MCF 10A (cell line): ENCODE measurements at regions of chr3 and their contacts with region 1.

Region 1: GRCh38 chr3:183252973-183253901 is at the start of gene B3GNT5:
- DNase-seq: peak; percentile 85
- H3K4me3 Mint-ChIP-seq: peak within 1 kb of the TSS; percentile 93
- H3K27ac Mint-ChIP-seq: no peak within 1 kb of the TSS
- H3K4me1 Mint-ChIP-seq: peaks cover 38% of the 10 kb centered on the region
- H3K27me3 Mint-ChIP-seq: no peaks in the 10 kb centered on the region
- CTCF ChIP-seq: no peak
- total RNA-seq, gene B3GNT5: 80.1 and 104 TPM in 2 replicates

Region 2: DNA sequence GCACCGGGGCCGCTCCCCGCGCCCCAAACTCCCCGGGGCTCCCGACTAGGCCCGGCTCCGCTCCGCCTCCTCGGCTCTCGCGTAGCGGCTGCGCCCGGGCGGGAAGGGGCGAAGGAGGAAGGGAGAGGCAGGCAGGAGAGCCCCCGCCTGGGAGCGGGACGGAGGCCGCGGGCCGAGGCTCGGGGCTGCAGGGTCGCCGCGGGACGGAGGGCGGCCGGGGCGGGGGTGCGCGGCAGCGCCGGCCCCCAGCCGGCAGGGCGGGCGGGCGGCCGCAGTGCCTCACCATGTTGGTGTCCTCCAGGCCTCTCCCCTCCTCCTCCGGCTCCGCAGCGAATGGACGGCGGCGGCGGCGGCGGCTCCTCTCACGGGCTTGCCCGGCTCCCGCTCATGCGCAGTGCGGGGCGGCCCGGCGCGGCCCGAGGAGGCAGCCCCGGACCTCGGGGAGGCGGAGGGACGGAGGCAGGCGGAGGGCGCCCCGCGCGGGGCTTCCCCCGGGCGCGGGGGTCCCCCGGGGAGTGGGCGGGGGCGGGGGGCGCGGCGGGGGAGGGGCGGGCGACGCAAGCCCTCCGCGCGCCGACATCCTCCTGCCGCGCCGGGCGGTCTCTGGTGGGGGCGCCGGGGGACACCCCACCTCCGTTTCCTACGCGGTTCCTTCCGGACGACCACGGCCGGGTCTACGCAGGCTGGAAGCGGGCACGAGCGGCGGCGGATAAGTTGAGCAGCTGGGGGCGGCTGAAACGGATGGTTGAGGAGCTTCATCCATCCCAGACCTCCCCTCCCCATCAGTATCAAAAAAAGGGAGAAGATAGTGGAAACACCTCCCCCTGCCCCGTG is 272.8 kb before region 1 on chr3 and contains the start of gene DCUN1D1:
- CTCF ChIA-PET with region 1: no interaction called
- POLR2A ChIA-PET with region 1: no interaction called
- intact Hi-C with region 1: no loop called
- DNase-seq: peak; percentile 86
- H3K4me3 Mint-ChIP-seq: peak within 1 kb of the TSS; percentile 81
- H3K27ac Mint-ChIP-seq: peak within 1 kb of the TSS; percentile 84
- H3K4me1 Mint-ChIP-seq: no peaks in the 10 kb centered on the region
- H3K27me3 Mint-ChIP-seq: no peaks in the 10 kb centered on the region
- CTCF ChIP-seq: no peak
- total RNA-seq, gene DCUN1D1: 39.1 and 50.1 TPM in 2 replicates

Region 3: DNA sequence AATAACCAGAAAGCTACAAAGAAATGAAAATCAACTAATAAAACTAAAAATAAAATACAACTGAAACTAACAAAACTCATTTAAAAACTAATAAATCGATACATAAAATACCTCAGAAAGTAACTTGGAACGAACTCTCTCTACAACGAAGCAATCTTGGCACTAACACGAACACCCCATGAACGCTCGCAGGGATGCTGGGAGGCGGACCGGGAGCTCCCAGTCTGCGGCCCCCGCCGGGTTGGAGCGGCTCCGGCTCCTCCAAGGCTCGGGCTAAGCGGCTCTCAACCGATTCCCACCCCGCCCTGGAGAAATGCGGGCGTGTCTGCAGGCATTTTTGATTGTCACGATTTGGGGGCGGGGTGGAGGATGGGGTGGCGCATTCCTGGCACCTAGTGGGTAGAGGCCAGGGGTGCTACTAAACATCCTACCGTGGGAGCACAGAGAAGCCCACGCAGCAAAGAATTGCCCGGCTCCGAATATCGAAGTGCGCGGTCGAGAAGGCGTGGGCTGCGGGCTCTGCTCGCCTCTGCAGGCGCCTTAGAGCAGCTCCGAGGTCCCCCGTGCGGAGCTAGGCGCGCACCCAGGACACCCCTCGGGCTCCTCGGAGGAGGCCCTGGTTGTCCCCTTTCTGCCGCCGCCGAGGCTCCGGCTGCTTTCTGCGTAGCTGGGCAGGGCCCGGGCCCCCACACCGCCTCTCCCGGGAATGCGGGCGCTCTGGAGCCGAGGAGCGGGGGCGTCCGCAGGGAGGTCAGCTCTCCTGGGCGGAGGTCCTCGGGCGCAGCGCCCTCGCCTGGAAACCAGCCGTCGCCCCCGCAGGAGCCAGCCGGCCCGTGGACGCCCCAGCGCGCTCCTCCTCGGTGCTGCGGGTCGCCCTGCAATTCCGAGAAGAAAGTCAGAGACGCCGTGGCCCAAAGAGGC is 74.3 kb before region 1 on chr3:
- CTCF ChIA-PET with region 1: interaction called, 36 read pairs
- POLR2A ChIA-PET with region 1: interaction called, 31 read pairs
- intact Hi-C with region 1: loop called (anchors 1 kb)
- DNase-seq: peak; percentile 61
- H3K4me3 Mint-ChIP-seq: peak overlapping the region; percentile 71
- H3K27ac Mint-ChIP-seq: no peak overlapping the region
- H3K4me1 Mint-ChIP-seq: peaks cover 5% of the 10 kb centered on the region
- H3K27me3 Mint-ChIP-seq: peaks cover 43% of the 10 kb centered on the region
- CTCF ChIP-seq: no peak

Region 4: GRCh38 chr3:183275418-183275817 is 22.2 kb after region 1 on chr3:
- CTCF ChIA-PET with region 1: interaction called, 3 read pairs
- POLR2A ChIA-PET with region 1: interaction called, 140 read pairs
- intact Hi-C with region 1: no loop called
- DNase-seq: peak; percentile 77
- H3K4me3 Mint-ChIP-seq: peak overlapping the region; percentile 19
- H3K27ac Mint-ChIP-seq: peak overlapping the region; percentile 17
- H3K4me1 Mint-ChIP-seq: peaks cover 41% of the 10 kb centered on the region
- H3K27me3 Mint-ChIP-seq: no peaks in the 10 kb centered on the region
- CTCF ChIP-seq: no peak

Region 5: DNA sequence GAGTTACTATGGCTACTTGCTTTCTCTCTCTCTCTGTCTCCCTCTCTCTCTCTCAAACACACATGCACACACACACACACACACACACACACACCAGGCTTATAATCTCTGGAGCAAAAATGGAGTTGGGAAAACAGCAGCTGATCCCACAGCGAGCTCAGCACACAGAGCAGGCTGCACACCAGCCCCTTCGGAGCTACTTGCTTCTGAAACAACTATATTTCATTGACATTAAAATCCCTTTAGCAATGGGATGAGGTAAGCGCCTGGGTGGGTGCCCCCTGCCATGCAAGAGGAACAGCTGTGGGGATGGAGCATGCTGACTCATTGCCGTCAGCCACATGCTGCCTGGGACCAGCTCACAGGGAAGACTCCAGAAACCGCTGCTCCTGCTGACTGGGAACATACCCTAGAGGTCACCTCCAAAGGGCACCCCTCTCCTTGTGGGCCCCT is 45.5 kb after region 1 on chr3:
- CTCF ChIA-PET with region 1: interaction called, 3 read pairs
- POLR2A ChIA-PET with region 1: interaction called, 17 read pairs
- intact Hi-C with region 1: no loop called
- DNase-seq: peak; percentile 87
- H3K4me3 Mint-ChIP-seq: no peak overlapping the region
- H3K27ac Mint-ChIP-seq: no peak overlapping the region
- H3K4me1 Mint-ChIP-seq: peaks cover 43% of the 10 kb centered on the region
- H3K27me3 Mint-ChIP-seq: no peaks in the 10 kb centered on the region
- CTCF ChIP-seq: no peak

Region 6: GRCh38 chr3:183369117-183369516 is 115.9 kb after region 1 on chr3:
- CTCF ChIA-PET with region 1: no interaction called
- POLR2A ChIA-PET with region 1: interaction called, 43 read pairs
- intact Hi-C with region 1: loop called (anchors 1 kb)
- DNase-seq: no peak
- H3K4me3 Mint-ChIP-seq: peak overlapping the region; percentile 20
- H3K27ac Mint-ChIP-seq: peak overlapping the region; percentile 96
- H3K4me1 Mint-ChIP-seq: peaks cover 26% of the 10 kb centered on the region
- H3K27me3 Mint-ChIP-seq: no peaks in the 10 kb centered on the region
- CTCF ChIP-seq: no peak

Region 7: DNA sequence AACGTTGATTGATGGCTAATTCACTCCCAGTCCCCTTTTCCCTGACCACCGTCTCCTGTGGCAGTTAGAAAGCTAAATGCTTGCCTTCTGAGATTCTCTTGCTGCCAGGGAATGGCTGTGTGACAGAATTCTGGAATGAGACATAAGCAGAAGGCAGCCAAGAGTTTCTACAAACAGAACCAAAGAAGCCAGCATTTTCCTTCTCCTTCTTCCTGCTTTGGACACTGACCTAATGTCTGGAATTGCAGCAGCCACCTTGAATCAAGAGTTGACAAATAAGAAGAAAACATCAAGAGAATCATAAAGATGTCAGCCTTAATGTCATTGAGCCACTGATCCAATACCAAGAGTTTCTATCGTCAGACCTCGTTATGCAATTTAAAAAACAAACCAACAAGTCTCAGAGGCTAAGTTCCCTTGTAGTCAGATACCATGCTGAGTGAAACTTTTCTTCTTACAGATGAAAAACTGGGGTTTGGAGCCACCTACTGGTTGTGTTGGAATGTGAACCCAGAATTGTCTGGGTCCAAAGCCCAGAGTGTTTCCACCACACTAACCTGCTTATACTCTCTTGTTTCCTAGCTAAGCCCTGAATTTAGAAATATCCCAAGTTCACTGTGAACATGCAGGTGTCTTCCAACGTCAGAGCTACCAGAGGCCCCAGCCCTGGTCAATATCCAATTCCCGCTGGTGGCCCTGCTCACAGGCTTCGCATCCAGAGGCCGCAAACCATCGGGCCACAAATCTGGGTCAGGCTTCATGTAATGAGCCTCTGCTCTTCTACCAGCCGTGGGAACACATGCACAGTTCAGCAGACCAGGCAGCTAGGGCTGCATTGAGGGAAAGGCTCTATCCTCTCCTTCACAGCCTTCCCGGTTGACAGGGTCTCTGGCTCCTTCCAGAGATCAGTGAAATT is 132.7 kb after region 1 on chr3:
- CTCF ChIA-PET with region 1: interaction called, 19 read pairs
- POLR2A ChIA-PET with region 1: interaction called, 82 read pairs
- intact Hi-C with region 1: loop called (anchors 1 kb)
- DNase-seq: peak; percentile 78
- H3K4me3 Mint-ChIP-seq: no peak overlapping the region
- H3K27ac Mint-ChIP-seq: no peak overlapping the region
- H3K4me1 Mint-ChIP-seq: peaks cover 18% of the 10 kb centered on the region
- H3K27me3 Mint-ChIP-seq: no peaks in the 10 kb centered on the region
- CTCF ChIP-seq: peak; percentile 77